HAP-1 (cell line): ENCODE measurements at regions of chr6 and their contacts with region 1.

Region 1: GRCh38 chr6:43667245-43668150 is 20.1 kb downstream of the MRPS18A start:
- DNase-seq: peak; percentile 58 to 89
- H3K4me3 ChIP-seq: no peak overlapping the region
- H3K4me1 ChIP-seq: no peaks in the 10 kb centered on the region
- H3K27me3 ChIP-seq: no peaks in the 10 kb centered on the region

Region 2: DNA sequence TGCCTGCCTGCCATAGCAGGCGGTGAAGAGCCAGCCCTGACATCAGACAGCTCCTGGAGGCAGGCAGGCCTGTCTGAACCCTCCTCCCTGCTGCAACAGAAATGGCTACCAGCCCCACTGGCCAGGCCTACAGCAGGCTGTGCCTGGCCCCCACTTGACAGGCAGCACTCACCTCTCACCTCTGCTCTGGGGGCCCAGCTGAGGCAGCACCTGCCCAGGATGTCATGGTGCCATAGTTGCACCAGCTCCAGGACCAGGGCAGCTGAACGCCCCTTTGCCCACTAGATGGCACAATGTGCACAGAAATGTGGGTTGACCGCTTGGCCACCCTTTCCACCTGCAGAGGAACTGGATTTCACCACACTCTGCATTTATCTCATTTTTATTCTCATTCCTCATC is 429.1 kb after region 1 on chr6:
- in situ Hi-C with region 1: loop called (anchors 25 kb)
- DNase-seq: peak in 1 of 2 experiments; percentile 77
- H3K4me3 ChIP-seq: no peak overlapping the region
- H3K4me1 ChIP-seq: no peaks in the 10 kb centered on the region
- H3K27me3 ChIP-seq: no peaks in the 10 kb centered on the region